ENCODE measurements at regions of chr14 and their contacts with region 1.

Region 1: GRCh38 chr14:71753126-71753830 is 179.0 kb upstream of the RGS6 start:
- DNase-seq: peak; percentile 84 to 97
- H3K4me3 ChIP-seq: no peak overlapping the region
- CTCF ChIP-seq: peak in 1 of 3 donors; percentile 51
- POLR2A ChIP-seq: no peak

Region 2: GRCh38 chr14:71138448-71139293 is 614.6 kb before region 1 on chr14:
- intact Hi-C with region 1: loop called (anchors 5 kb)
- DNase-seq: peak; percentile 26 to 88
- H3K4me3 ChIP-seq: no peak overlapping the region
- CTCF ChIP-seq: peak in 1 of 3 donors; percentile 74
- POLR2A ChIP-seq: no peak

Measured in lower leg skin (tissue), 4 donors.